A673 (cell line): ENCODE measurements at regions of chr11 and their contacts with region 1.

Region 1: GRCh38 chr11:28770806-28771205 is 662.6 kb downstream of the METTL15 start:
- DNase-seq: no peak
- H3K4me3 ChIP-seq: no peak overlapping the region
- H3K27ac ChIP-seq: no peak overlapping the region
- H3K4me1 ChIP-seq: no peaks in the 10 kb centered on the region
- H3K27me3 ChIP-seq: no peaks in the 10 kb centered on the region
- CTCF ChIP-seq: no peak

Region 2: DNA sequence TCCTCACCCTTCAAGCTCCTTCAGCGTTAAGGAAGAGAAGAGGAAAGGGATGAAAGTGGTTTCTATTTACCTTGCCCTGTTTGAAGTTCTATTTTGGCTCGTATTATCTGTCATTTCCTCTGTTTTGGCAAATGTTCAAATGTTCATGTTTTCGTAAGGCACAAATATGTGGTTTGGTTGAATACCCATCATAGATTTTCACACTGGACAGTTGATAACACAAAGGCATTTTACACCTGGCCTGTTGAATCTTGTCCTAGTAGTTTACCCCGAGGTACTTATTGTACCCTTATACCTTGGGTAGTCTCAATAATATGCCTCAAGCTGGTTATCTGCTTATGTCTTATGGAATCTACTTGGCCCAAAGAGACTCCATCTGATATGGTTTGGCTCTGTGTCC is 44.3 kb after region 1 on chr11:
- CTCF ChIA-PET with region 1: no interaction called
- POLR2A ChIA-PET with region 1: no interaction called
- intact Hi-C with region 1: loop called (anchors 1 kb)
- DNase-seq: no peak
- H3K4me3 ChIP-seq: no peak overlapping the region
- H3K27ac ChIP-seq: no peak overlapping the region
- H3K4me1 ChIP-seq: no peaks in the 10 kb centered on the region
- H3K27me3 ChIP-seq: no peaks in the 10 kb centered on the region
- CTCF ChIP-seq: no peak

Region 3: GRCh38 chr11:28922386-28922981 is 151.7 kb after region 1 on chr11:
- CTCF ChIA-PET with region 1: no interaction called
- POLR2A ChIA-PET with region 1: no interaction called
- intact Hi-C with region 1: no loop called
- DNase-seq: no peak
- H3K4me3 ChIP-seq: no peak overlapping the region
- H3K27ac ChIP-seq: no peak overlapping the region
- H3K4me1 ChIP-seq: no peaks in the 10 kb centered on the region
- H3K27me3 ChIP-seq: no peaks in the 10 kb centered on the region
- CTCF ChIP-seq: no peak